ENCODE measurements at regions of chr11 and their contacts with region 1.

Region 1: DNA sequence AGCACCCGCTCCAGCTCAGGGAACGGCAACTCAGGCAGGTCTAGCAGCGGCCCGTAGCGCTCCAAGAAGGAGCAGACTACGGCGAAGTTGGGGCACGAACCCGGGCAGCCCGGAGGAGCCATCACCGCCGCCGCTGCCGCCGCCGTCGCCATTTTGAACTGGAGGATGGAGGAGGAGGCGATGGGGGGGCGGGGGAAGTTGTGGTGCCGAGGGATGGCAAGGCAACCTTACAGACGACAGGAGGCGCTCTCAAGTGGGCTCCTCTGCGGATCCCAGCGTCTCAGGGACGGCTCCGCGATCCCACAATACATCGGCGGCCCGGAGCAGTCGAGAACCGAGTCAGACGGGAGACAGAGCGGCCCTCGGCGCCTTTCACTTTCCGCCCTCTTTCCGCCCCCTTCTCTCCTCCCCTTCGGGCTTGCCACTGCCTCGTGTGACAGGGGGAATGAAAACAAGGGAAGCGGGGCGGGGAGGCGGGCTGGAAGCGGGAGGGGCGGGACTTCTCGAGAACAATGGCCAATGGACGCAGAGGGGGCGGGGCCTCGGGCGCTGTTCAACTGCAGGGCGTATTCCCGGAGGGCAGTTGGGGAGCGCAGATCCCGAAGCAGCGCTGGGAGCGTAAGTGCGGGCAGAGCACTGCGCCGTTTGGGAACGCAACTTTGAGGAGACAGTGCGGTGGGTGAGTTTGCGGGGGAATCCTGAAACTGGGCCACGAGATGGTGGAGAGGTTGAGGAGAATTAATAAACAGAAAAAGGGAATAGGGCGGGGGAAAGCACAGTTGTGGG is at the starts of genes AAMDC and RSF1:
- DNase-seq: peak; percentile 99
- ATAC-seq: peak; percentile 93 to 96 (median 95)
- H3K4me3 ChIP-seq: peak within 1 kb of the TSS; percentile 81 to 100 (median 98)
- H3K27ac ChIP-seq: peak within 1 kb of the TSS; percentile 84 to 98 (median 97)
- H3K4me1 ChIP-seq: peaks cover 0 to 61% (median 48%) of the 10 kb centered on the region in 12 donors
- H3K27me3 ChIP-seq: no peaks in the 10 kb centered on the region
- CTCF ChIP-seq: peak; percentile 50 to 87 (median 74)
- POLR2A ChIP-seq: peak; percentile 71 to 95
- total RNA-seq, gene AAMDC: 56.9 to 123 (median 77.0) TPM
- total RNA-seq, gene RSF1: 32.8 to 49.2 (median 43.6) TPM

Region 2: DNA sequence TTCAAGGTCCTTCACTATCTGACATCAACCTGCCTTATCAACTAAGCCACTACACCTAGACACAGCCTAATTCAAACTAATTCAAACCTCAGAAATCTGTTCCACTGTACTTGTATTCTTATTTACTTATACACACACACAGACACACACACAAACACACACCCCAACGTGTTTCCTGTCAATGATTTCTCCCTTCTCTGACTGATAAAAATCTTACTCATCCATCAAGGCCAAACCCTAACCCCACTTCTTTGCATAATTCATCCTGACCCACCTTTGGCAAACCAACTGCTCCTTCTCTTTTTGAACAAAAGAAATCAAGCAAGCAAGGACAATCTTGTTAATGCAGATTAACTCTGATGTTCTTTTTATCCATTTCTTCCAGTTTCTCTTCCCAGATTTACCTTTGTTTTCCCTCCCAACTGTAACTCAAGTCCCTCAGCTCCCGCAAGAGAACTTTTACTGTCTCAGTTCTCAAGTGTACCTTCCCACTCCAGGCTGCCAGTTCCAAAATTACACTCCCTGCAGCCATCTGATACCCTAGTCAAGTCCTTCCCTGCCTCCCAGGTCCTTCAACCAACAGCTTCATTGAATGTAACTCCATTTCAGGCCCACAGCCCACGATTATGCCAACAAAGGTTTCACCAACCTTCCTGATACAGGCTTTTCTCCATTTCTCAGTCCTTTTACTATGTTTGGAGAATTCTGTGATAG is 425.1 kb before region 1 on chr11:
- intact Hi-C with region 1: no loop called
- DNase-seq: no peak
- ATAC-seq: no peak
- H3K4me3 ChIP-seq: no peak overlapping the region
- H3K27ac ChIP-seq: no peak overlapping the region
- H3K4me1 ChIP-seq: peaks cover 0 to 12% (median 6%) of the 10 kb centered on the region in 12 donors
- H3K27me3 ChIP-seq: no peaks in the 10 kb centered on the region
- CTCF ChIP-seq: no peak
- POLR2A ChIP-seq: no peak

Region 3: DNA sequence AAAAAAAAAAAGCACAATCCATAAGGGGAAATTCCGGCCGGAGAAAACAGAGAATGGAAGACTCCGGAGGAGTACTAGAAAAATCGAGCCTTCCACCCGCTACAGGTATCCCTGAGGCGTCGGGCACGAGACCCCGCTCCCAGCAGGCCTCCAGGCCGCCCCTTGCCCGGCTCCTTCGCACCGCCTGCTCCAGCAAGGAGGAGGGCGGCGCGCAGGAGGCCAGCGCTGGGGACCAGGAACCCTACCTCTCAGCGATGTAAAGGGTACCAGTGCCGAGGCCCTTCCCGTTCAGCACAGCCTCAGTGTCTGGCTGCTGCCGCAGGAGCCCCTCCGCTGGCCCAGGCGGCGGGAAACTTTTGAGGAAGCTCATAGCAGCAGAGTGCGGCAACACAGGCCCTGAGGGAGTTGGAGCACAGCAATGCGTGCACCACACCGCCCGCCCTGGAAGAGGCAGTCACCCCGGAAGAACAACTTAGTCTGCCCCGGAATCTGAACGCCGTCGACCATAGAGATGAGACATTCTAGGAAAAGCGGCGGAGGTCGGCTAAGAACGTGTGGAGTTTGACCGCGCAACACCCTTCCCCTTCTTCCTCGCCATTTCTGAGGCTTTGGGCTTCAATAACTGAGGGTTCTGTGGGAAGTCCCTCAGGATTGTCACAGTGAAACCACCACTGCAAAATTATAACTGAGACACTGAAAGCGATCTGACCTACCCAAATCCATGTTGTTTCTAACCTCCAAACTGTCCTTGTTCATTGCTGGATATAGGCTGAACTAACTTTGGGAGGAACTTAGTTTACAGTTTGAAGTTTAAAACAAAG is 183.2 kb before region 1 on chr11 and contains the start of gene CLNS1A:
- intact Hi-C with region 1: loop called in 2 of 10 experiments (anchors 1 to 2 kb)
- DNase-seq: peak; percentile 87 to 89 (median 88)
- ATAC-seq: peak; percentile 98 to 100 (median 99)
- H3K4me3 ChIP-seq: peak within 1 kb of the TSS; percentile 66 to 97 (median 85)
- H3K27ac ChIP-seq: peak within 1 kb of the TSS; percentile 77 to 93 (median 86)
- H3K4me1 ChIP-seq: peaks cover 0 to 40% (median 15%) of the 10 kb centered on the region in 12 donors
- H3K27me3 ChIP-seq: no peaks in the 10 kb centered on the region
- CTCF ChIP-seq: peak in 2 of 12 donors; percentile 10
- POLR2A ChIP-seq: peak in 1 of 2 donors; percentile 71
- total RNA-seq, gene CLNS1A: 60.8 to 85.1 (median 69.4) TPM

Region 4: DNA sequence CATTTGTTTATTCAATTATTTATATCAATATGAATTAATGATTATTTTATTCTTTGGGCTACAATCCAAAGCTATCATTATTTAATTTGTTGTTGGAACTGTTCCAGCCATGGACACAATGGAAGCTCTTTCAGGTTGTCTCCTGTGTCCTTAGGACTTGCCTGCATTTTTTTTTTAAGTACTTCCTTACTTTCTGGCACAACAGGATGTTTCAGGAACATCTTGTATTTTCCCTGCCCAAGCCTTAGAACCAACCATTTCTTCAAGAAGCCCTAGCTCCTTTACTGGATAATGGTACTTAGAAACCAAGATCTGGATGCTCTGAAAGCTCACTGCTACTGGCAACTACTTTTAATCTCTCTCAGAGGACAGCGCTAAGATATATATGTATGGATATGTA is 125.3 kb before region 1 on chr11:
- intact Hi-C with region 1: loop called in 2 of 10 experiments (anchors 10 kb)
- DNase-seq: no peak
- ATAC-seq: peak in 1 of 4 donors; percentile 61
- H3K4me3 ChIP-seq: no peak overlapping the region
- H3K27ac ChIP-seq: peak overlapping the region in 7 of 12 donors; percentile 4 to 60 (median 15)
- H3K4me1 ChIP-seq: peaks cover 0 to 7% (median 0%) of the 10 kb centered on the region in 12 donors
- H3K27me3 ChIP-seq: no peaks in the 10 kb centered on the region
- CTCF ChIP-seq: no peak
- POLR2A ChIP-seq: no peak

Region 5: DNA sequence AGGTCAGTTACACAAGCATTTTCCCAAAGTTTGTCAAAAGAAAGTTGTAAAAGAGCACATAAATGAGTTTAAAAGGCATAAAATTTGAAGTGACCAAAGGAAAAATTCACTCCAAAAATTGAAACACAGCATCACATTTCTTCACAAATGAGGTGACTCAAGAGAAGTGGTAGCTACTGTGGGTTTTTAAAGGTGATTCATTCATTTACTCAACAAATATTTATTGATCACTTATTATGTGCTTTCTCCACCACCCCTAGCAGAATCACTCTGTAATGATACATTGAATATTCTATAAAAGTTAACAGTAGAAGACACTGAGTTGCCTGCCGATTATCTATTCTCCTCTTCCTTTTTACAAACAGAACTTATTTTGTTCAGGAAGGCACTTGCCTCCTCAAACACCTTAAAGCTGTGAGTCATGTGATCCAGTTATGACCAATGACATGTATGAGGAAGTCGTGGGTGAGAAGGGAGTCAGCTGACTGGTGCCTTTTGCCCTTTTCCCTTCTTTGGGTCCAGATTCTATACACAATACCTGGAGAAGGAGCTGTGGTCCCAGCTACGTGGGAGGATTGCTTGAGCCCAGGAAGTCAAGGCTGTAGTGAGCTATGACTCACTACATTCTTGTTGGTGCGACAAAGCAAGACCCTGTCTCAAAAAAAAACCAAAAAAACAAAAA is 115.4 kb before region 1 on chr11:
- intact Hi-C with region 1: loop called in 1 of 10 experiments (anchors 10 kb)
- DNase-seq: no peak
- ATAC-seq: no peak
- H3K4me3 ChIP-seq: no peak overlapping the region
- H3K27ac ChIP-seq: no peak overlapping the region
- H3K4me1 ChIP-seq: peaks cover 0 to 6% (median 0%) of the 10 kb centered on the region in 12 donors
- H3K27me3 ChIP-seq: no peaks in the 10 kb centered on the region
- CTCF ChIP-seq: no peak
- POLR2A ChIP-seq: no peak

Region 6: GRCh38 chr11:77762426-77762825 is 58.3 kb before region 1 on chr11:
- intact Hi-C with region 1: loop called in 2 of 10 experiments (anchors 10 kb)
- DNase-seq: no peak
- ATAC-seq: no peak
- H3K4me3 ChIP-seq: no peak overlapping the region
- H3K27ac ChIP-seq: no peak overlapping the region
- H3K4me1 ChIP-seq: peaks cover 0 to 7% (median 0%) of the 10 kb centered on the region in 12 donors
- H3K27me3 ChIP-seq: no peaks in the 10 kb centered on the region
- CTCF ChIP-seq: no peak
- POLR2A ChIP-seq: no peak

Region 7: GRCh38 chr11:77799338-77799737 is 21.4 kb before region 1 on chr11:
- intact Hi-C with region 1: loop called in 1 of 10 experiments (anchors 2 kb)
- DNase-seq: no peak
- ATAC-seq: peak in 1 of 4 donors; percentile 51
- H3K4me3 ChIP-seq: no peak overlapping the region
- H3K27ac ChIP-seq: no peak overlapping the region
- H3K4me1 ChIP-seq: peaks cover 0 to 28% (median 16%) of the 10 kb centered on the region in 12 donors
- H3K27me3 ChIP-seq: no peaks in the 10 kb centered on the region
- CTCF ChIP-seq: no peak
- POLR2A ChIP-seq: no peak

Region 8: GRCh38 chr11:77994412-77995362 is 173.9 kb after region 1 on chr11 and contains the start of gene INTS4:
- intact Hi-C with region 1: loop called in 9 of 10 experiments (anchors 1 to 10 kb)
- DNase-seq: peak; percentile 99 to 100 (median 99)
- ATAC-seq: peak; percentile 99
- H3K4me3 ChIP-seq: peak within 1 kb of the TSS; percentile 35 to 91 (median 72)
- H3K27ac ChIP-seq: peak within 1 kb of the TSS in 11 of 12 donors; percentile 73 to 92 (median 84)
- H3K4me1 ChIP-seq: peaks cover 0 to 27% (median 17%) of the 10 kb centered on the region in 12 donors
- H3K27me3 ChIP-seq: no peaks in the 10 kb centered on the region
- CTCF ChIP-seq: no peak
- POLR2A ChIP-seq: peak; percentile 11 to 59
- total RNA-seq, gene INTS4: 11.6 to 23.9 (median 15.6) TPM